ENCODE measurements at regions of chrX and their contacts with region 1.

Region 1: DNA sequence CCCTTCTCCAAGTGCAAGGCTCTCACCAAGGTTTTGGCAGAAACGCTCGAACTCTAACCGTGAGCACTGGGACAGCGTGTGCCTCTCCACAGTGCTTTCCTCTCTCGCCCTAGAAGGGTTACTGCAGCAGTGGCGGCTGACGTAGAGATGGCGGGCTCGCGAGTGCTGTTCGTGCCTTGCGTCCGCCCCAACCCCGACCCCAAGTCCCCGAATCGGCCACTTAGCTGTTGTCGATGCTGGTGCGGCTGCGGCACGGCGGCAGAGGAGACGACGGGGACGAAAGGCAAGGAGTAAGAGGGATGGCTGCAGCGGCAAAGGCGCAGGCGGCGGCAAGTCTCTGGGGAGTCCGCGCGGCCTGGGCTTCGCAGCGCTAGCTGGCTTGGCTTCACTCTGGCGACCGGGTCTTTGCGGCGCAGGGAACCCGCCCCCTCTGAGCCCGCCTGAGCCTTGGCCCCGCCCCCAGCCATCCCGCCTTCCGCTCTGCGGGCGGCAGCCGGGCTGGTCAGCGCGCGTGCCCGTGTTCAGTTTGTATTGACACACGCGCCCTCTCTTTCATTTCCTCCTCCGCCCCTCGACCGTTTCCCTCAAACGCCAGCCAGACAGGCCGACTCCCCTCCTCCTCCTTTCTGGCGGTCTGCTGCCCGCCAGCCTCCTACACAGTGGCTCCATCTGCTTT is at the start of gene SPIN4:
- DNase-seq: peak; percentile 75 to 87
- H3K4me3 ChIP-seq: peak within 1 kb of the TSS; percentile 83
- H3K27ac ChIP-seq: peak within 1 kb of the TSS; percentile 82
- H3K4me1 ChIP-seq: peaks cover 22% of the 10 kb centered on the region
- H3K27me3 ChIP-seq: no peaks in the 10 kb centered on the region
- CTCF ChIP-seq: no peak
- total RNA-seq, gene SPIN4: 14.1 and 20.1 TPM in 2 replicates

Region 2: DNA sequence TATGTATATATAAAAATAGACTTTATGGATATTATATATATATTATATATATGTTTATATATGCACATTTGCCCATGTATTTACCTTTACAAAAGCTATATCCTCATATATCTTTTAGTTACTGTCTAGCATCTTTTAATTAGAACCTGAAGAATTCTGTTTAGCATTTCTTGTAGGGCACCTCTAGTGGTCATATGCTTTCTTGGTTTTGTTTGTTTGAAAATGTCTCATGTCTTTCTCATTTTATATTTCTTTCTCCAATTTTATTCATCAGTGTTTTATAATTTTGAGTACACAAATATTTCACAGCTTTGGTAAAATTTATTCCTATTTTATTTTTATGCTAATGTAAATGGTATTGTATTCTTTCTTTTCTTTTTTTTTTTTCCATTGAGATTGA is 70.3 kb after region 1 on chrX:
- CTCF ChIA-PET with region 1: no interaction called
- POLR2A ChIA-PET with region 1: no interaction called
- intact Hi-C with region 1: loop called (anchors 2 kb)
- DNase-seq: no peak
- H3K4me3 ChIP-seq: no peak overlapping the region
- H3K27ac ChIP-seq: no peak overlapping the region
- H3K4me1 ChIP-seq: peaks cover 17% of the 10 kb centered on the region
- H3K27me3 ChIP-seq: no peaks in the 10 kb centered on the region
- CTCF ChIP-seq: no peak; the same call in 1 of the 2 replicates

Region 3: DNA sequence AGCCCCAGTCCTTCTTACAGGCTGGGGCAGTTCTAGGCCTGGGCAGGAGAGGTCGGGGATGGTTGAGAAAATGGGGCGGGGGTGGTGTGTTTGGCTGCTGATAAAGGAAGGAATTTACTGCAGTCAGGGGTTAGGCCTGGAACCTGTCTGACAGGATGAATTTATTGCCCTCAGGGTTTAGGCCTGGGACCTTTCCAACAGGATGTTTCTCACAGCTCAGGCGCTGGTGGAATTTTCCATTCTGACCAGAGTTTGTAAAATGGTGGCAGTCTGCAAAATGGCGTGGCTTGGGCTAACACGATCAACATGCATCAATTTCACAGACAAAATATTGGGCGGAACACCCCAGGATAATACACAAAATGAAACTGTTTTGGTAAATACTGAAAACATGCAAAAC is 83.6 kb after region 1 on chrX:
- CTCF ChIA-PET with region 1: no interaction called
- POLR2A ChIA-PET with region 1: no interaction called
- intact Hi-C with region 1: loop called (anchors 1 kb)
- DNase-seq: peak; percentile 80 to 86
- H3K4me3 ChIP-seq: peak overlapping the region; percentile 45; the same call in 1 of the 2 replicates
- H3K27ac ChIP-seq: peak overlapping the region; percentile 99
- H3K4me1 ChIP-seq: peaks cover 32% of the 10 kb centered on the region
- H3K27me3 ChIP-seq: no peaks in the 10 kb centered on the region
- CTCF ChIP-seq: no peak

Region 4: GRCh38 chrX:63506320-63506719 is 155.2 kb after region 1 on chrX:
- CTCF ChIA-PET with region 1: no interaction called
- POLR2A ChIA-PET with region 1: no interaction called
- intact Hi-C with region 1: loop called (anchors 2 kb)
- DNase-seq: no peak
- H3K4me3 ChIP-seq: no peak overlapping the region
- H3K27ac ChIP-seq: no peak overlapping the region
- H3K4me1 ChIP-seq: peaks cover 10% of the 10 kb centered on the region
- H3K27me3 ChIP-seq: no peaks in the 10 kb centered on the region
- CTCF ChIP-seq: peak; percentile 58

Region 5: GRCh38 chrX:63560601-63561218 is 209.6 kb after region 1 on chrX:
- CTCF ChIA-PET with region 1: no interaction called
- POLR2A ChIA-PET with region 1: no interaction called
- intact Hi-C with region 1: loop called (anchors 2 kb)
- DNase-seq: peak; percentile 50 to 71
- H3K4me3 ChIP-seq: peak overlapping the region; percentile 83
- H3K27ac ChIP-seq: peak overlapping the region; percentile 63
- H3K4me1 ChIP-seq: peaks cover 11% of the 10 kb centered on the region; the same call in 1 of the 2 replicates
- H3K27me3 ChIP-seq: no peaks in the 10 kb centered on the region
- CTCF ChIP-seq: no peak

Measured in PC-9 (cell line).